A549 (cell line): ENCODE measurements at regions of chr7 and their contacts with region 1.

Region 1: DNA sequence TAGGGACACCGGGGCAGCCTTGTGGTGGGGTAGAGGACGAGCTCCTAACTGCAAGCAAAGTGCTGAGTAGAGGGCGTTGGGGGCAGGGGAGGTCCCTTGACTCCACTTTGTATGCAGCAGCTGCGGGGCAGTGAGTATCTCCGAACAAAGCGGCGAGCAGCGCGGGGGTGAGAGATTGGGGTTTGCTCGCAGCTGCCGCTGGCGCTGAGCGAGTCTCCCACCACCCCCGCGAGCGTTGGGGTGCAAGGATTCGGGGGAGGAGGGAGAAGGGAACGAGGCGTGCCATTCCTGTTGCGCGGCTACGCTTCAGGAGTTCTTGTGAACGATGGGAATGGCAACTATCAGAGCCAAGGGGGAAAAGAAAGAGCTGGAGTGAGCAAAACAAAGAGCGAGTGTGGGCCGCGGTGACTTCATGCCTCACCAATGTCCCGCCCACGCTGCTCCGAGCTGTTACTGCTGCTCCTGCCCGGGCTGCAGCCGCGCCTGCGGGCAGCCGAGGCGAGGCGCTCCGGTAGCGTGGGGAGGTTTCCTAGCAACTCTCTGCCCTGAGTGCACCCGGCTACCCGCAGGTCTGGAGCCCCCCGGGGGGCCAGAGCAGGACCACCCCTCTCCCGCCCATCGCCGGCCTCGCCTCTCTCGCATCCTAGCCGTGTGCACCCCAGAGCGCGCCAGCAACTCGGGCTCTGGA is at the start of gene ITGB8:
- DNase-seq: peak; percentile 47 to 71
- ATAC-seq: peak; percentile 88 to 90
- H3K4me3 ChIP-seq: peak within 1 kb of the TSS; percentile 56
- H3K27ac ChIP-seq: peak within 1 kb of the TSS; percentile 64 to 86
- H3K4me1 ChIP-seq: peaks cover 5% of the 10 kb centered on the region; the same call in 2 of the 3 replicates
- CTCF ChIP-seq: no peak
- EP300 ChIP-seq: no peak
- POLR2A ChIP-seq: no peak
- RAD21 ChIP-seq: no peak; a peak in 1 of 5 replicates
- polyA plus RNA-seq, gene ITGB8: 0.63 and 0.67 TPM in 2 replicates

Region 2: DNA sequence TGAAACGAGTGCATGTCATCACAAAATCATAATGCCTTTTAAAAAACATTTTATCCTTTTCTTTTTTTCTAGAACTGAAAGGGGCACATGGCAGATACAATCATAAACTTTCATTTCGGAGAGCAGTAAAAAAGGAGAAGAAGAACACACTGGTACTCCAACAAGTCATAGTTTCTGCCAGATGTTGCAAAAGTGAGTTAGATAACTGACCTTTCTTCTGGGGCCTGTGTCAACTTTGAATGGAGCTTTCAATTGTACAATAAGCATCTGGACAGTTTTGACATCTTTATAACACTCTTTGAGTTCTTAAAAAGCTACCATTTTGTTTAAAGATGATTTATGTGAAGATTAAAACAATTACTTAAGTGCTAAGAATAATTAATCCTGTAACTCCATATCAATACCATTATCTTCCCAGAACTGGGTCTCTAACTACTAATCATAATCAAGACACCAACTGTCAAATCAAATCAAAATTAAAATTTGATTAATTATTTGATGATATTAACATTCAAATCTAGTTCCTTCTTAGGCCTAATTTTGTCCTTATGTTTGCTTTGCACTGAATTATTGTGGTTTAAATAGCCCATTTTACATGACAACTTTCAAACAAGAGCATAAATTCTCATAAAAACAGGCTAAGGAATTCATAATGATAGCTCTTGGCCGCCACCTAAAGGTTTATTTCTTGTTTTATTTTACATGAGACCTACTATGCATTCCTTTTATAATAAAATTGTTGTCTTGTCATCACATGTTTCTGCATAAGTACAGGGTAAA is 19.2 kb before region 1 on chr7:
- CTCF ChIA-PET with region 1: interaction called, 11 read pairs
- POLR2A ChIA-PET with region 1: no interaction called
- DNase-seq: peak in 1 of 2 experiments; percentile 52
- ATAC-seq: peak in 1 of 2 experiments; percentile 47; a peak in 1 of 6 replicates
- H3K4me3 ChIP-seq: no peak overlapping the region
- H3K27ac ChIP-seq: no peak overlapping the region
- H3K4me1 ChIP-seq: peaks cover 8% of the 10 kb centered on the region; the same call in 1 of the 3 replicates
- CTCF ChIP-seq: peak; percentile 62
- EP300 ChIP-seq: no peak
- POLR2A ChIP-seq: no peak
- RAD21 ChIP-seq: peak; percentile 78 to 84

Region 3: GRCh38 chr7:20343205-20343604 is 12.8 kb after region 1 on chr7:
- CTCF ChIA-PET with region 1: interaction called, 13 read pairs
- POLR2A ChIA-PET with region 1: no interaction called
- DNase-seq: peak in 1 of 2 experiments; percentile 37
- ATAC-seq: peak; percentile 59 to 68; a peak in 2 of 6 replicates
- H3K4me3 ChIP-seq: no peak overlapping the region
- H3K27ac ChIP-seq: no peak overlapping the region
- H3K4me1 ChIP-seq: no peaks in the 10 kb centered on the region
- CTCF ChIP-seq: no peak; the same call in 2 of the 3 replicates
- EP300 ChIP-seq: no peak
- POLR2A ChIP-seq: no peak
- RAD21 ChIP-seq: peak; percentile 23 to 53; a peak in 4 of 5 replicates

Region 4: GRCh38 chr7:20352573-20353304 is 22.4 kb after region 1 on chr7:
- CTCF ChIA-PET with region 1: interaction called, 4 read pairs
- POLR2A ChIA-PET with region 1: interaction called, 12 read pairs
- DNase-seq: peak; percentile 85 to 95
- ATAC-seq: peak; percentile 98
- H3K4me3 ChIP-seq: no peak overlapping the region
- H3K27ac ChIP-seq: peak overlapping the region; percentile 73 to 74
- H3K4me1 ChIP-seq: peaks cover 30% of the 10 kb centered on the region
- CTCF ChIP-seq: no peak
- EP300 ChIP-seq: peak; percentile 63 to 82; a peak in 3 of 5 replicates
- POLR2A ChIP-seq: no peak
- RAD21 ChIP-seq: peak; percentile 18 to 42; a peak in 3 of 5 replicates